ENCODE measurements at regions of chr17 and their contacts with region 1.

Region 1: GRCh38 chr17:36534840-36535668 is at the starts of genes MYO19 and PIGW:
- DNase-seq: peak; percentile 79 to 88
- ATAC-seq: peak; percentile 84 to 89
- H3K4me3 ChIP-seq: peak within 1 kb of the TSS; percentile 70 to 98 (median 92)
- H3K27ac ChIP-seq: peak within 1 kb of the TSS; percentile 91 to 100 (median 99)
- H3K4me1 ChIP-seq: peaks cover 11 to 19% of the 10 kb centered on the region in 2 donors
- H3K27me3 ChIP-seq: no peaks in the 10 kb centered on the region
- CTCF ChIP-seq: peak in 1 of 5 experiments; percentile 11
- POLR2A ChIP-seq: peak; percentile 83 to 92
- total RNA-seq, gene MYO19: 7.5 to 16.8 (median 13.2) TPM
- total RNA-seq, gene PIGW: 3.0 to 6.9 (median 4.7) TPM

Region 2: DNA sequence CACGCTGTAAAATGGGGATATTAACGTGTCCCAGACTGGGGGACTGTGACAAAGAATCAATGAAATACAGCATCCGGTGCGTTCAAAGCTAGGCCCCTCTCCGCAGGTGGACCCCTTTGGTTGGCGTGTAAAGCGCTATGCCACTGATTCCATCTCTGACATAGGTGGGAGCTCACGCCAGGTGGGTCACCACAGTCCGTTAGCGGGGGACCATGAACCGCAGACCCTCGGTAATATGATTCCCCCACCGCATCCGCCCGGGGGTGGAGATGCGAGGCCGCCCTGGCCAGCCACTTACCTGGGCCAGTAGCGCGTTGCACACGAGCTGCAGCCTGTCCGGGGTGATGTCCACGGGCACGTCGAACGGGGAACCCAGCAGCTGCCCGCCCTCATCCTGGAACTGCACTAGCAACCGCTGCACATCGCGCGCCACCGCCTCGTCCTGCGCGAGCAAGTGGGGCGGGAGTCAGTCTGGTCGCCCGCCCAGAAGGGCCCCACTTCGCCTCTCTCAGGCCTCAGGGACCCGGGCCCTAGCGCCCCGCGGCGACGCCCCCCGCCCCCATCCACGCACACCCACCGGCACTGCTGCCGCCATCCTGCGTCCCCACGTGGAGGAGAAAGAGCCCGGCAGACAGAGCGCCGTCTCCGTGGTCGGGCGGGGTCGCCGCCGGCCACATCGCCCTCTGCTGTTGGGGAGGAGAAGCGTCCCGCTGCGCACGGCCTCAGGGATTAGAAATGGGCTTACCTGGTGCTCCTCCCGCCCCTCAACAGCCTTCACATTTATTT is 1393.2 kb before region 1 on chr17 and contains the start of gene NLE1:
- in situ Hi-C with region 1: no loop called
- intact Hi-C with region 1: loop called (anchors 10 kb)
- DNase-seq: peak; percentile 68
- ATAC-seq: peak; percentile 77 to 84
- H3K4me3 ChIP-seq: peak within 1 kb of the TSS; percentile 76 to 99 (median 88)
- H3K27ac ChIP-seq: peak within 1 kb of the TSS; percentile 12 to 49 (median 40)
- H3K4me1 ChIP-seq: peaks cover 15 to 23% of the 10 kb centered on the region in 2 donors
- H3K27me3 ChIP-seq: no peaks in the 10 kb centered on the region
- CTCF ChIP-seq: peak; percentile 82 to 97 (median 87)
- POLR2A ChIP-seq: no peak
- total RNA-seq, gene NLE1: 9.9 to 19.3 (median 11.5) TPM

Region 3: DNA sequence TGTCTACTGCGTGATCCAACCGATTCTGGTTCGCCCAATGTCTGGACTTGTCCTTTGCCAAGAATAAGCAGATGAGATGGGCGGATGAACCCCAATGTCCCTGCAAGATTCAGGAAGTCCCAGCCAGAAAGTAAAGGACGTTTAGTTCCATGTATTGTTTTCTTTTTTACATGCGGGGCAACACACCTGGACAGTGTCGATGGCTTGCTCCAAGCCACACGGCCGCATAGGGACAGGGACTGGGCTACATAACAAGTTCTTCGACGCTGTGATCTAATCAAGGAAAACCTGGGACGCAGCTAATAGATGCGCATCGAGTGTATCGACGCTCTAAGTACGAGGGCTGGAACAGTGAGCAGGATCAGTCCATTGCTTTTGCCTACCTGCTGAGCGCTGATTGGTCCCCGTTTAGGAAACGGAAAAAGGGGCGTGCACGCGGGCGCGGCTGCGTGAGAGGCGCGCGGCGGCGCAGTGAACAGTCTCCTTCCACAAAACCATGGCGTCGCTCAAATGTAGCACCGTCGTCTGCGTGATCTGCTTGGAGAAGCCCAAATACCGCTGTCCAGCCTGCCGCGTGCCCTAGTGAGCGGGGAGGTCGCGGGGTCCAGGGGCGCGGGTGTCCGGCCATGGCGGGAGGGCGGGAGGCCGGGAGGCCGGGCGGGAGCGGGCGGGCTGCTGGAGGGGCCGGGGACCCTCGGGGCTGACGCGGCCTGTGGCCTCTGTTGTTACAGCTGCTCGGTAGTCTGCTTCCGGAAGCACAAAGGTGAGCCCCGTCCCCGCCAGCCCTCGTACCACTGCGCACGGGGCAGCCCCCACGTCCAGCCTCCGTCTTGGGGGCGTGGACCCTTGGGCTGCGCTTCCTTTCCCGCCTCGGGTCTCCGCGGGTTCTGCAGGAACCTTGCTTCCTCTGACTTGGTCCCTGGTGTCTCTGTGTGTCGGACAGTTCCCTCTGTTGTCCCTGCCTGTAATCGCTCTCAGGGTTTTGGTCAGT is 48.6 kb before region 1 on chr17 and contains the start of gene ZNHIT3:
- in situ Hi-C with region 1: no loop called
- intact Hi-C with region 1: loop called (anchors 1 kb)
- DNase-seq: peak; percentile 84 to 88
- ATAC-seq: peak; percentile 96 to 97
- H3K4me3 ChIP-seq: peak within 1 kb of the TSS; percentile 80 to 92 (median 86)
- H3K27ac ChIP-seq: peak within 1 kb of the TSS; percentile 76 to 91 (median 82)
- H3K4me1 ChIP-seq: peaks cover 24 to 34% of the 10 kb centered on the region in 2 donors
- H3K27me3 ChIP-seq: peaks cover 0 to 3% (median 0%) of the 10 kb centered on the region in 3 donors
- CTCF ChIP-seq: no peak
- POLR2A ChIP-seq: peak; percentile 22 to 42
- total RNA-seq, gene ZNHIT3: 33.4 to 52.7 (median 39.3) TPM

Region 4: GRCh38 chr17:36591434-36592315 is 56.6 kb after region 1 on chr17 and contains the start of gene DHRS11:
- in situ Hi-C with region 1: loop called in 1 of 4 experiments (anchors 10 kb)
- intact Hi-C with region 1: no loop called
- DNase-seq: peak; percentile 61 to 77
- ATAC-seq: peak; percentile 91 to 94
- H3K4me3 ChIP-seq: peak within 1 kb of the TSS; percentile 73 to 78 (median 75)
- H3K27ac ChIP-seq: peak within 1 kb of the TSS; percentile 49 to 79 (median 78)
- H3K4me1 ChIP-seq: peaks cover 14 to 20% of the 10 kb centered on the region in 2 donors
- H3K27me3 ChIP-seq: no peaks in the 10 kb centered on the region
- CTCF ChIP-seq: no peak
- POLR2A ChIP-seq: peak in 1 of 2 donors; percentile 26
- total RNA-seq, gene DHRS11: 4.9 to 15.8 (median 7.4) TPM